Posterior vena cava (tissue), 2 donors: ENCODE measurements at regions of chr20 and their contacts with region 1.

Region 1: GRCh38 chr20:49610701-49611538 is 43.0 kb upstream of the PTGIS start:
- DNase-seq: peak; percentile 93

Region 2: GRCh38 chr20:49323622-49324238 is 287.2 kb before region 1 on chr20:
- intact Hi-C with region 1: loop called in 1 of 2 experiments (anchors 10 kb)
- DNase-seq: peak; percentile 56

Region 3: DNA sequence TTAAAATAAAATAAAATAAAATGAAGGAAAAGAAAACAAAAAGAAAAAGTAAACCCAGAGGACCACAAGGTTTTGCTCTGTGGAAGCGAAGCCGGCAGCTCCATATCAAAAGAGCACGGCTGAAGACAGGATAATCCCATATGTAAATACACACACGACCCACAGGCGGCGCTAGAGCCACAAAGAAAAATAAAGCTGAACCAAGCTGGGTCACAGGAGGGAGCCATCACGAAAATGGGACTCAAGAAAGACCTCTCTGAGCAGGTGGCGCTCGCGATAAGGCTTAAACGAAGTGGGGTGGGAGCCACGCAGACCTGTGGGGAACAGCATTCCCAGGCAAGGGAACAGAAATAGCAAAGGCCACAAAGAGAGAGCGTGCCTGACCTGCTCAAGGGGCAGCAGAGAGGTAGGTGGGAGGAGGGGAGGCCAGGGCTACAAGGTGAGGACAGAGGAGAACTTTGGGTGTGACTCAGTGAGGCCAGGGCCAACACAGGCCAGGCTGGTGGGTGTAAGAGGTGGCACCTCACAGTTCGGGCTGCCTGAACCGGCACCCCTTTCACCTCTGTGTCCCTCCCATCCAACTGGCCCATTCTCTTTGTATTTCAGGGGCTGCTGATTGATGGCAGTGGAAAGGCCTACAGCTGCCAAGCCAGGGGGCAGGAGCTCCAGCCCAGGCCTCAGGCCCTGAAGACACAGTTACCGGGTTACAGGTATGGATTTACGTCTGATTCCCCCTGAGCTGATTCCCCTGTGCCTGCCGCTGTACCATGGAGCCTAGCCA is 69.0 kb before region 1 on chr20:
- intact Hi-C with region 1: loop called (anchors 2 to 5 kb)
- DNase-seq: no peak

Region 4: DNA sequence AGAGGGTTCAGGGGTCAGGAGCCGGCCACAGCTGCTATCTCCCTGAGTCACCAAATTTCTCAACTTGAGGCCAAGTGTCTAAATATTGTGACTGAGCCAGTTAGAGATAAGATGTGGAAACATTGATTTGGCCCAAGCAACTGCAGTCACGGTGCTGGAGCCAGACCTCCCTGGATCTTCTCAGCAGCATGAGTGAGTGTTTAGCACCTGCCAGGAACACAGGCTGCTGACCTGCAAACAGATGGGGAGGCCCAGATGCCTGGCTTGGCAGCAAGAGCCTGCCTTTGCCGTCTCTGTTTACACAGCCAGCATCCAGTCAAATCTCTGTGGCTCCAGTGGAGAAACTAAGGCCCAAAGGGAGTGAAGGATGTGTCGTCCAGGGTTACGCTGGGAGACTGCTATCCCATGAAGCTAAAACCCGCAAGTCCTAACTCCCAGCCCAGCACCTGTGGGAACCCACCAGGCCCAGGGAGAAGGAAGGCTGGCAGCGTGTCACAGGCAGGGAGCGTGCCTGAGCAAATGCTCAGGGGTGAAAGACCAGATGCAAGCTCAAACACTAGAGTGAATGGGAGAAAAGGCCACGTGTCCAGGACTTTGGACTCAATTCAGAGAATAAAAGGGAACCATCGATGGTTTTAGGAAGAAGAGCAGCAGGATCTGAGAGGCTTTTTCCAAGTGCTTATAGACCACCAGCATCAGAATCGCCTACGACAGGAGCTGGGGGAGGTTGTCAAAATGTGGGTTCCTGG is 27.1 kb before region 1 on chr20:
- intact Hi-C with region 1: no loop called
- DNase-seq: peak; percentile 92

Region 5: DNA sequence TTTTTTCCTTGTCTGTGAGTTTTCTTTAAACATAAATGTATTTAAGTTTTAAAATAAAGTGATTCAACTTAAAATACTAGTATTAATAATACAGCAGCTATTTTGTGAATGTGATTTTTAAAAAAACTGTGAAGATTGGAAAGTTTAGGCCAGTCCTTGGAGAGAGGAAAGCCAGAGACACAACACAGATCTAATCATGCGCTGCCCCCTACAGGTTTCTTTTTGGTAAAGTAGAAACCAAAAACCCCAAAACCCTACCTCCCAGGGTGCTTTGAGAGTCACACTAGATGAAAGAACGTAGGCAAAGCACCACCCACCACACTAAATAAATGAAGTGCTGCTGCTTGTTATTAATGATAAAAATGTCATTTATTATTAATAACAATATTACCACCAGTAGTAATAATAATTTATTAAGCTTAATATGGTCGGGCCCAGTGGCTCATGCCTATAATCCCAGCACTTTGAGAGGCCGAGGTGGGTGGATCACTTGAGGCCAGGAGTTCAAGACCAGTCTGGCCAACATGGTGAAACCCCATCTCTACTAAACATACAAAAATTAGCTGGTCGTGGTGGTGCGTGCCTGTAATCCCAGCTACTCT is 235.4 kb after region 1 on chr20:
- intact Hi-C with region 1: loop called (anchors 2 to 5 kb)
- DNase-seq: no peak

Region 6: DNA sequence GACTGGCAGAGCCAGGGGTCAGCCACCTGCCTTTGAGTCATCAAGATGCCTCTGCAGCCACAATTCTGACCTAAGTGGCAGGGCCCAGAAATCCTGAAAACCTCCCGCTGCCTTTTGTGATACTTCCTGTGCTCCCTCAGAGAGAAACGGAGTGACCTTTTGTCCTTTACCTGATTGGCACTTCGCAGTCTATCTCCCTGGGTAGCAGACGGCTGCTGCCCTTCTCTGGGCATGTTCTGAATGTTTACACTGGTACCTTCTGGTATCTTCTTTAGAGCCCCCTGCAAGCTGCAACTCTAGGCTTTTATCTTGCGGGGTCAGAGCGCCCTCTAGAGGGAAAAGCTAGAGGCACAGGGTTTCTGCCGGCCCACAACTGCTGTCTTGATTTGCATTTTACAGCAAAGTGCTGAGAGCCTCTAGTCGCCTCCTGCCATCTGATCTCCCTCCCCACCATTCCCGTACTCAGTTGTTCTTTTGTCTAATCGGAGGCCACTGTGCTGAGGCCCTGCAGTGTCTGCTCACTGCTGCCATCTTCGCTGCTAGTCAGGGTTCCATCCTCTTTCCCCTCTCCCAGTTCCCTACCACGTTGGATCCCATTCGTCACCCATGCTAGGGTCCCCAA is 277.5 kb after region 1 on chr20:
- intact Hi-C with region 1: loop called (anchors 10 kb)
- DNase-seq: peak; percentile 86

Region 7: GRCh38 chr20:50414897-50415515 is 804.1 kb after region 1 on chr20:
- intact Hi-C with region 1: loop called in 1 of 2 experiments (anchors 5 kb)
- DNase-seq: no peak